ENCODE measurements at regions of chr2 and their contacts with region 1.

Region 1: GRCh38 chr2:207166039-207166348 is 246 bp upstream of the KLF7 start:
- DNase-seq: peak; percentile 99
- ATAC-seq: peak; percentile 79 to 84
- H3K4me3 ChIP-seq: peak overlapping the region; percentile 71 to 90 (median 78)
- H3K27ac ChIP-seq: peak overlapping the region; percentile 97 to 100 (median 100)
- H3K4me1 ChIP-seq: peaks cover 17 to 37% of the 10 kb centered on the region in 2 donors
- H3K27me3 ChIP-seq: peaks cover 0 to 9% (median 0%) of the 10 kb centered on the region in 3 donors
- CTCF ChIP-seq: no peak
- POLR2A ChIP-seq: no peak

Region 2: GRCh38 chr2:206981739-206982340 is 184.2 kb before region 1 on chr2:
- in situ Hi-C with region 1: no loop called
- intact Hi-C with region 1: loop called (anchors 10 kb)
- DNase-seq: peak; percentile 29 to 30
- ATAC-seq: peak in 1 of 2 donors; percentile 74
- H3K4me3 ChIP-seq: no peak overlapping the region
- H3K27ac ChIP-seq: peak overlapping the region in 1 of 4 donors; percentile 10
- H3K4me1 ChIP-seq: peaks cover 0 to 8% of the 10 kb centered on the region in 2 donors
- H3K27me3 ChIP-seq: no peaks in the 10 kb centered on the region
- CTCF ChIP-seq: peak; percentile 54 to 82 (median 59)
- POLR2A ChIP-seq: no peak

Region 3: DNA sequence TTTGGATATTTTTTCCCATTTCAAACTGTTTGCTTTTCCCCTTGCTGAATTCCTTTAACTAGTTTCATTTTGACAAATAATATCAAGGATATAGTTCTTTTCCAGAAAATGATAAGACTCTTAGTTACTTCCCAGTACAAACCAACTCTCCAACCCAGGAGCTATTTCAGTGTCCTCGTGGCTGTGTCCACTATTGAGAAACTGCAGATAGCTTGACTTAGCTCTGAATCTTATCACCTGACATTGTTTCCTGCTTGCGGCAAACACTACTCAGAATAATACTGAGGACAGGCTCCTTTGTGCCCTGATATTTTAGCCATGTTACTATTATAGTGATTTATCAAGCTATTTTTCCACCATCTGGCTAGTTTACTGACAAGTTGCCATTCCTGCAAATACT is 74.8 kb before region 1 on chr2:
- in situ Hi-C with region 1: no loop called
- intact Hi-C with region 1: loop called (anchors 5 kb)
- DNase-seq: no peak
- ATAC-seq: peak; percentile 55 to 61
- H3K4me3 ChIP-seq: no peak overlapping the region
- H3K27ac ChIP-seq: peak overlapping the region in 2 of 4 donors; percentile 15 to 18
- H3K4me1 ChIP-seq: peaks cover 15 to 45% of the 10 kb centered on the region in 2 donors
- H3K27me3 ChIP-seq: no peaks in the 10 kb centered on the region
- CTCF ChIP-seq: no peak
- POLR2A ChIP-seq: no peak

Region 4: GRCh38 chr2:207227062-207227748 is 61.2 kb after region 1 on chr2:
- in situ Hi-C with region 1: no loop called
- intact Hi-C with region 1: loop called (anchors 5 kb)
- DNase-seq: peak; percentile 39 to 66
- ATAC-seq: peak; percentile 69 to 87
- H3K4me3 ChIP-seq: peak overlapping the region; percentile 4 to 25 (median 18)
- H3K27ac ChIP-seq: peak overlapping the region in 3 of 4 donors; percentile 22 to 35 (median 33)
- H3K4me1 ChIP-seq: peaks cover 18 to 32% of the 10 kb centered on the region in 2 donors
- H3K27me3 ChIP-seq: no peaks in the 10 kb centered on the region
- CTCF ChIP-seq: no peak
- POLR2A ChIP-seq: no peak

Region 5: DNA sequence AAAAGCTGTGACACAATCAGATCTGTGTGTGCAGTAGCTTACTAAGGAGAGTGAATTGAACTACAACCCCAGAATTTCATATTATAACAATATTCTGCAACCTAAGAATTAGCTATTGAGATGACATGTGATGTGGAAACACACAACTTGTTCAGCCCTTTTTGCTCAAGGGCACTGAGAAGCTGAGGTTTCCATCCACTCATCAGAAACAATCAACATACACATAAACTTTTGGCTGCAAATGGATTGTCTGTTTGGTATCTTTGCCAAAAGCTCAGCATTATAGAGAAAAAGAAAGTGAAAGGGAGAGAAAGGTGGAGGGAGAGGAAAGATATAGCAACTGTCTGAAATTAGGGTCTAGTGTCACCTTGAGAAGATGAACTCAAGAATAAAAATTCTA is 116.9 kb after region 1 on chr2:
- in situ Hi-C with region 1: no loop called
- intact Hi-C with region 1: no loop called
- DNase-seq: no peak
- ATAC-seq: no peak
- H3K4me3 ChIP-seq: no peak overlapping the region
- H3K27ac ChIP-seq: no peak overlapping the region
- H3K4me1 ChIP-seq: no peaks in the 10 kb centered on the region
- H3K27me3 ChIP-seq: no peaks in the 10 kb centered on the region
- CTCF ChIP-seq: no peak
- POLR2A ChIP-seq: no peak

Region 6: DNA sequence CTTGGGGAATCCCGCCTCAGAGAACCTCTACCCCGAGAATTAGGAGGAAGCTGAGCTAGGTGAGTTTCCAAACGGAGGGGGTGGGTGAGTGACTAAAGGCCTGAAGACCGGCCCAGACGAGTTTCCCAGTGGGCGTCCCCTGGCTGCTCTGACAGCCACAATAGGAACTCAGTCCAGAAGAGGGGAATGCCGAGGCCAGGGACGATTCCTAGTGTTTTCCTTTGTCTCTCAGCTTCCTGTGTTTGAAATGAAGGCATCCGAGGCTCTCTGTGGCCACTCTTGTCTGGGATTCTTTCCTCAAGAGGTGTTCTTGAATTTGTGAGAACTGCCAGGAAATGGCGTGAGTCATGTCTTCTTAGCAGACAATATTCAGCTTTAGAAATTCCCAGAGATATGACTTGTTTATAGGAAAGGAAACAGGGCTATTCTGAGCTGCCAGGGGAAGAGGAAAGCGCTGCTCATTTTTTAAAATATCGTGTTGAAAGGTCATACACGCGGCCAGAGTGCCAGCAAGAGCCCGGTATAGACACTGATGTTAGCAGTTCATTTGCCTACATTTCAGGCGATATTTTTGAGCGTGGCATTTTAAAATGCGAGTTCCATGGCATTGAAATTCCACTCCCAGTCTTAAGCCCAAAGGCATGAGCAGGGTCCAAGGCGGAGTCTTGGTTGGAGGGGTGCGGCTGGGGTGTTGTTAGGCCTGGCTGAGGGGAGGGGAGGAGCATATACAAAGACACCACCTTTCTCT is 168.8 kb after region 1 on chr2:
- in situ Hi-C with region 1: no loop called
- intact Hi-C with region 1: loop called (anchors 10 kb)
- DNase-seq: peak; percentile 17 to 34
- ATAC-seq: peak; percentile 76 to 83
- H3K4me3 ChIP-seq: peak overlapping the region; percentile 6 to 34 (median 32)
- H3K27ac ChIP-seq: peak overlapping the region; percentile 77 to 81 (median 80)
- H3K4me1 ChIP-seq: peaks cover 10 to 16% of the 10 kb centered on the region in 2 donors
- H3K27me3 ChIP-seq: no peaks in the 10 kb centered on the region
- CTCF ChIP-seq: no peak
- POLR2A ChIP-seq: no peak

Measured in gastrocnemius medialis (tissue), 4 donors.